ENCODE measurements at regions of chr1 and their contacts with region 1.

Region 1: GRCh38 chr1:167627865-167628641 is 2.0 kb upstream of the RCSD1 start:
- DNase-seq: peak; percentile 96
- H3K4me3 ChIP-seq: peak overlapping the region; percentile 93
- H3K27ac ChIP-seq: peak overlapping the region; percentile 99
- H3K4me1 ChIP-seq: peaks cover 82% of the 10 kb centered on the region
- CTCF ChIP-seq: no peak

Region 2: GRCh38 chr1:167357305-167357704 is 270.7 kb before region 1 on chr1:
- CTCF ChIA-PET with region 1: no interaction called
- POLR2A ChIA-PET with region 1: no interaction called
- intact Hi-C with region 1: loop called (anchors 5 kb)
- DNase-seq: peak; percentile 95
- H3K4me3 ChIP-seq: peak overlapping the region; percentile 57
- H3K27ac ChIP-seq: peak overlapping the region; percentile 100
- H3K4me1 ChIP-seq: peaks cover 83% of the 10 kb centered on the region
- CTCF ChIP-seq: no peak

Region 3: DNA sequence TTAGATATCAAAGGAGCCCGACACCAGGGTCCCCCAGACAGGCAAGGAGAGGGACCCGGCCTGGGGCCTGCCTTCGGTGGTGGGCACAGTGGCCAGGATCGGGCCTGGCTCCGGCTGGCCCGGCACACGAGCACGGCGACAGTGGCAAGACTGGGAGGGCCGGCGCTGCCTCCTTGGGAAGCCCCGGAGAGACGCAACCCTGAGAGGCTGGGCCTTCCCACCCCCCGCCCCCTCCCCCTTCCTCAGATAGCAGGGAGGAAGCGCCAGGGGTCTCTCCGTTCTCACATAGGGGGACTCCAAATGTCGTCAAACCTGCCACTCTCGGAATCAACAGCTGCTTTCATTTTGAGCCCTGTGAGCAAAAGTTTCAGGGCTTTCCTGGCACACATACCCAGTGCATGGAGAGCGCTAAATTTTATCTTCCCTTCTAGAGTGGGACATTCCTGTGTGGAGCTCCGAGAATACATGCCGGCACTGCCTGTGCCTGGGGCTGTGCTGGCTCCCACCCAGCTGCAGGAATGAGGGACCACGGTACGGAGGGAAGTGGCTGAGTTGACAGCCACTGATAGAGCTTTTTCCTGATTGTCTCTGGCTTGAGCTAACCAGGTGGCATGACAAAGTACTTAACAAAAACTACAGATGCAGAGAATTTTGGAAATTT is 172.1 kb before region 1 on chr1:
- CTCF ChIA-PET with region 1: no interaction called
- POLR2A ChIA-PET with region 1: no interaction called
- intact Hi-C with region 1: no loop called
- DNase-seq: no peak
- H3K4me3 ChIP-seq: peak overlapping the region; percentile 70
- H3K27ac ChIP-seq: no peak overlapping the region
- H3K4me1 ChIP-seq: peaks cover 32% of the 10 kb centered on the region
- CTCF ChIP-seq: no peak

Region 4: DNA sequence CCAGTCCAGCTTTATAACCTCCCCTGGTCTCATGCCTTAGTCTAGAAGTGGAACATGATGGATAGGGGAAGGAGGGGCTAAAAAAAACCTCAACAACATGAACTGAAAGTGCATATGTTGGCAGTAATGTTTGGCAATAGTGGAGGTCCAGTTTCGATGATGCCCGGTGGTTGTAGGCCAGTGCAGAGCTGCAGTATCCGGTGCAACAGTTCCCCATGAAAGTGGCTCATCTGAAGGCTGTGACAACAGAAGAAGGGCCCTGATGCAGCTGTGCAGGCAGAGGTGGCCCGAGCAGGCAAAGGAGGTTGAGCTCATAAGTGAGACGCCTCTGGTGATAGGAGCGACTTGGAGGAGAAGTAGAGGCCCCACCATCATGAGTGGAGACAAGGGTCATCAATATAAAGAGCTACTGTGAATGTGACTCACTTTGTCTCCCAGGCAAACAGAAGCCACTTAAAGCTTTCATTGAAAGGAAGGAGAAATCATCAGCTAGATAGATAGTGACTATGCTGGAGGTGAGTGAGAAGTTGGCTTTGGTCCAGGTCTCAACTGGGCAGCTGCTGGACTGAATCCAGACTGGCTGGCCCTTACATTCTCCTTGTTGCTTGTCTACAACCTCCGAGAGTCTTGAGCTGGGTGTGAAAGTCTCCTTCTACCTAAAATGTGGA is 64.3 kb before region 1 on chr1:
- CTCF ChIA-PET with region 1: interaction called, 3 read pairs
- POLR2A ChIA-PET with region 1: interaction called, 3 read pairs
- intact Hi-C with region 1: loop called (anchors 5 kb)
- DNase-seq: no peak
- H3K4me3 ChIP-seq: no peak overlapping the region
- H3K27ac ChIP-seq: no peak overlapping the region
- H3K4me1 ChIP-seq: peaks cover 48% of the 10 kb centered on the region
- CTCF ChIP-seq: no peak

Region 5: DNA sequence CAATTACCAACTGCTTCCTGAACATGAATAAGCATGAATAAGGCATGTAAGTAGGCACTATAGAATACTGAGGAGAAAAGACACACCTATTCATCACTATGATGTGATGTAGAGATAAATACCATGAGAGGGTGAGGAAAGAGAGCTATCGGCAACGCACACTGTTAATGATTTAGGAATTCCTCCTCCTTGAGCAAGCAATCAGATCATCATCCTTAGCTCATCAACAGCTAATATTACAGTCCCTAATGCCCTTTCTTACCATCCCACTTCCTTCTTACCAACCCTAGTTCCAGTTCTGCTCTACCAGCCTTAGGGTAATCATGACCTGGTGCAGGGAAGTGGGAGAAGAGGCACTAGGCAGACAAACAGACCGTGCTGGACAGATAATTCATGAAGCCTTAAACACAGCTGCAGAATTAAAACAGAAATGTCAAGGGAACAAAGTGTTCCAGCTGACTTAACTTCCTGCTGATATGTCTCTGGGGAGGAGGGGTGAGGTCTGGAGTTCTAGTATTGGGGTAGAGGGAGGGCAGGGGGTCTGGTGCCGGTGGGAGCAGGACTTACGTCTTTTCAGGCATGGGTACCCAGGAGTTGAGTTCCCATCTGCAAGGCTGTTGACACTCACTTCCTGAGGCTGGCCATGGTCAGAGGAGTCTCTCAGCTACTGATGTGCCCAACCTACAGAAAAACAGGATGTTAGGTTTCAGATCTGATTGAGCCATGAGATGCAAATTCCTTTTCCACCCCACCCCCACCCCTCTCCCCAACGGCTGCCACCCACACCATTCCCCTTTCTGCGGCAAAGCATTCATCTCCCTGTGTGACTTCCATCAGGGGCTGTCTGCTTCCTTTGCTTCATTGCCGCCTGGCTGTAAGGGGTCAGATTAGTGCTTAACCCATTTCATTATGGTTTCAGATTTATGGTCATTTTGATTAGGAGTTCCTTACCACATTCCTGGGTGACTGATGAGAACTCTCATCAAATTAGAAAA is 10.6 kb before region 1 on chr1:
- CTCF ChIA-PET with region 1: interaction called, 9 read pairs
- POLR2A ChIA-PET with region 1: interaction called, 250 read pairs
- intact Hi-C with region 1: loop called (anchors 1 kb)
- DNase-seq: peak; percentile 98
- H3K4me3 ChIP-seq: peak overlapping the region; percentile 68
- H3K27ac ChIP-seq: peak overlapping the region; percentile 96
- H3K4me1 ChIP-seq: peaks cover 83% of the 10 kb centered on the region
- CTCF ChIP-seq: no peak

Region 6: DNA sequence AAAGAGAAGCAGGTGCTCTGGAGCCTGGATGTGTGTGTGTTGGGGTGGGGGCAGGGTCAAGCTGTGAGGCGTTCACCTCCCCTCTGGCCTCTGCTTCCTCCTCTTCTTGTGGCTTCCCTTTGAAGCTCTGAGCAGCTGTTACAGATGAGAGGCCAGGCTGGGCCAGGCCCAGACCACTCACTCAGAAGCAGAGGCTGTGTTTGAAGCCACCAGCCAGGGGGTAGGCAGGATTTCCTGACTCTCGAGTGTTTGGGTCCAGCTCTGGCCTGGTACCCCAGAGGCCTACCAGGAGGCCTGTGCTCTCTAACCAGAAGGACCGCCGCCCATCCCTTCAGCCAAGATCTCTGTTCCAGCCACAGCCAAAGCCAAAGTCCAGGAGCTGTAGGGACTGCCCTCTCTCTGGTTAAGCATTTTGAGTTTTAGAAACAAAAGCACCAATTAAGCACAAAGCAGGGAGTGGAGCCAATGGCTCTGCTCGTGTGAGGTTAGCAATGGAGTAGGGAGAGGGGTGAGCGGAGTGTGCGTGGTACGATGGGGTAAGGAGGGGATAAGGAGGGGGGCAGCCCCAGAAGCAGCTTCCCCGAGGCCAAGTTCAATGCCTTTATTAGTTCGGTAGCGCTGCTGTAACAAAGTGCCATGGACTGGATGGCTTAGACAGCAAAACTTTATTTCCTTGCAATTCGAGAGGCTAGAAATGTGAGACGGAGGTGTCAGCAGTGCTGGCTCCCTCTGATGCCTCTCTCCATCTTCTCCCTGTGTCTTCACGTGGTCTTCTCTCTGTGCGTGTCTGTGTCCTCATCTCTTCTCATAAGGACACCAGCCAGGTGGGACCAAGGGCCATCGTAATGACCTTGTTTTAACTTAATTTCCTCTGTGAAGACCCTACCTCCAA is 22.5 kb after region 1 on chr1:
- CTCF ChIA-PET with region 1: no interaction called
- POLR2A ChIA-PET with region 1: interaction called, 19 read pairs
- intact Hi-C with region 1: no loop called
- DNase-seq: peak; percentile 84
- H3K4me3 ChIP-seq: peak overlapping the region; percentile 12
- H3K27ac ChIP-seq: peak overlapping the region; percentile 64
- H3K4me1 ChIP-seq: peaks cover 74% of the 10 kb centered on the region
- CTCF ChIP-seq: no peak

Region 7: DNA sequence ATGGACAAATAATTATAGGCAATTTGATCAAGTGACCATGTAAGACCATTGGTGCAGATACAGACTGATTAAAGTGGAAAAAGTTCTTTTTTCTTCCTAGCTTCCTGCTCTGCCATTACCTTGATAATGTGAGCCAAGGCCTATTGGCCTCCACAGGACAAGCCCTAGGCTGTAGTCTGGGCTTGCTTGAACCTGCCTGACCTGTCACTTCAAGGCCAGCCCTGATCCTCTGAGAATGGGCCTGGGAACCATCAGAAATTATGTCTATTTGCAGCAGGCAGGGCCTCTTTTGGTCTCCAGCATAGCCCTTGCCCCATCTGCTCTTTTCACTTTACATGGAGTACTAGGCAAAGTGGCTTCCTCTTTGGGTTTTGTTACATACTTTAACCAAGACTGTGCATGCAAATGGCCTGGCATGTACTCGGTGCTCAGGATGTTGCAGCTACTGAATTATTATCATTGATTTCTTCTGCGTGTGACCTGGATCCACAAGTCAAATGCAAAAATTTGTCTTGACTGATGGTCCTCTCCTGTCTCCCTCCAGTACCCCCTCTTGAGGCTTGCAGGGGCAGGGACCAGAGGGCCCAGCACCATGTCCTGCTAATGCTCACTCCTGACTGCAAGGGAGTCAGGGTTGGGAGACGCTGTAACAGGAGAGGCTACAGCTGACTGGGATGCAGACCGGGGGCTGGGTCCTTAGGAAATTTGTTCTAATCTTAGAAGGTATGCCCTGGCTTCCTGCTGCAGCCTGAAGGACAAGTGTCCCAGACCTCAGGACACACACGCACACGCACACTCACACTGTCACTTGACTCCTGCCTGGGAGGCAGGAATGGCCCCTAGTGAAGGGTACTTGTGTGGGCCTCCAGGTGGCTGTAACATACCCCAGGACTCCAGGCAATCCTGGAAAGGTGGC is 41.4 kb after region 1 on chr1:
- CTCF ChIA-PET with region 1: no interaction called
- POLR2A ChIA-PET with region 1: interaction called, 10 read pairs
- intact Hi-C with region 1: loop called (anchors 2 kb)
- DNase-seq: peak; percentile 69
- H3K4me3 ChIP-seq: peak overlapping the region; percentile 43
- H3K27ac ChIP-seq: peak overlapping the region; percentile 58
- H3K4me1 ChIP-seq: peaks cover 57% of the 10 kb centered on the region
- CTCF ChIP-seq: no peak

Region 8: GRCh38 chr1:167687919-167688519 is 60.0 kb after region 1 on chr1:
- CTCF ChIA-PET with region 1: no interaction called
- POLR2A ChIA-PET with region 1: interaction called, 3 read pairs
- intact Hi-C with region 1: loop called (anchors 1 kb)
- DNase-seq: peak; percentile 86
- H3K4me3 ChIP-seq: no peak overlapping the region
- H3K27ac ChIP-seq: peak overlapping the region; percentile 52
- H3K4me1 ChIP-seq: peaks cover 23% of the 10 kb centered on the region
- CTCF ChIP-seq: peak; percentile 98